GM12878 (cell line): ENCODE measurements at regions of chr20 and their contacts with region 1.

Region 1: DNA sequence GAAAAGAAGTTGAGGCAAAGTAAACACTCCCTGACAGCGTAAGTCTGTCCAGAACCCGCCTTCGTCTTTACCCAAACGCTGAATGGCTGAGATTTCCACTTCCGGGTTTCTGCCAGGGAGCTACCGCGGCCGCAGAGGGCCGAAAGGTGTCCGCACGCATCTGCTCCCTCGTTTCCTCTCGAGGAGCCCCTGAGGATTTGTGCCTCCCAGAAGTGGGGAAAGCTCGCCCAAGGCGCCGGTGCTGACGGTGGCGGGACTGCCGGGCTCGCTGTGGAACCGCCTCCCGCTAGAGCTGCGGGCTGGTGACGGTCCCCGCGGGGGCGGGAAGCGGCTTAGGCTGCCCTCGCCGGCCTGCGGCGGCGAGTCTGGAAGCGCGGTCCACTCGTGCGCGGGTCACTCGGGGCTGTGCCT is 1760.2 kb upstream of the DEFB115 start:
- DNase-seq: no peak
- ATAC-seq: no peak
- H3K4me3 ChIP-seq: no peak overlapping the region
- H3K27ac ChIP-seq: no peak overlapping the region
- H3K4me1 ChIP-seq: no peaks in the 10 kb centered on the region
- H3K27me3 ChIP-seq: no peaks in the 10 kb centered on the region
- CTCF ChIP-seq: no peak
- EP300 ChIP-seq: no peak
- POLR2A ChIP-seq: no peak
- RAD21 ChIP-seq: no peak

Region 2: GRCh38 chr20:29079769-29080690 is 417.2 kb before region 1 on chr20:
- CTCF ChIA-PET with region 1: no interaction called
- POLR2A ChIA-PET with region 1: no interaction called
- RAD21 ChIA-PET with region 1: no interaction called
- SMC1A ChIA-PET with region 1: no interaction called
- in situ Hi-C with region 1: loop called (anchors 5 kb)
- intact Hi-C with region 1: no loop called
- DNase-seq: no peak
- ATAC-seq: no peak
- H3K4me3 ChIP-seq: no peak overlapping the region
- H3K27ac ChIP-seq: no peak overlapping the region
- H3K4me1 ChIP-seq: no peaks in the 10 kb centered on the region
- H3K27me3 ChIP-seq: no peaks in the 10 kb centered on the region
- CTCF ChIP-seq: no peak
- EP300 ChIP-seq: no peak
- POLR2A ChIP-seq: no peak
- RAD21 ChIP-seq: no peak